ENCODE measurements at regions of chr17 and their contacts with region 1.

Region 1: GRCh38 chr17:19470532-19471261 is 59.7 kb downstream of the RNF112 start:
- DNase-seq: peak; percentile 78 to 95 (median 90)
- ATAC-seq: peak; percentile 91 to 96
- H3K4me3 ChIP-seq: peak overlapping the region; percentile 34
- H3K27ac ChIP-seq: peak overlapping the region; percentile 76
- H3K4me1 ChIP-seq: no peaks in the 10 kb centered on the region
- H3K27me3 ChIP-seq: no peaks in the 10 kb centered on the region

Region 2: DNA sequence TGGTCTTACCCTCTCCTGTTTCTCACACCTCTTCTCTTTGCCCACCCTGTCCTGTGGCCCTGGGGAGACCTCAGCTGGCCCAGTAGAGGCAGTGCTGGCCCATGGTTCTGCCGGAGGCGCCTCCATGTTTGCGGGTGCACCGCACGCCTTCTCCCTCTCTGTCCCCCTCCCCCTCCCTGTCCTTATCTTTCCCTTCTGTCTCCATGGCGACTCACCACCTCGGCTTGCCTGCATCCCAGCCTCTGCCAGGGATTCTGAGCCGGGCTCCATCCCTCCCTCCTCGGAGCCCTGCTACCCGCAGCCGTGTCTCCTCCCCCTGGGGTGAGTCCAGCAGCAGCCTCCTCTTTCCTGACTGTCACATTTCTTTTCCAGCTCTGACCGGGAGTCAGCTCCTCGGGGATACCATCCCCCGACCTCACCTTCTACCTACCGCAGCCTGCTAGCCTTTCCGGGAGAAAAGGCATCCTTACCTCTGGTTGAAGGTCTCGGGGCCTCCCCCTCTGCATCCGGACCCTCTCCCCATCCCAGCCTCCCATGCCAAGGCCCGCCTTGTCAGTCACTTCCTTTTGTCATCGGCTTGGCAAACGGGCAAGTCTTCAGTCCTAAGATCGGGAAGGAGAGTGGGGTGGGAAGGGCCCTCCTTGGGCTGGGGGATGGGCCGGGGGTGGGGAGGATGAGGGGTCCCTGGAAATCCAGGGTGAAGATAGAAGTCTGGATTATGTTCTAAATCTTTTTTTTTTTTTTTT is 59.6 kb before region 1 on chr17 and contains the start of gene RNF112:
- intact Hi-C with region 1: no loop called
- DNase-seq: peak; percentile 63 to 84 (median 80)
- ATAC-seq: peak; percentile 54 to 56
- H3K4me3 ChIP-seq: peak within 1 kb of the TSS; percentile 5
- H3K27ac ChIP-seq: no peak within 1 kb of the TSS
- H3K4me1 ChIP-seq: no peaks in the 10 kb centered on the region
- H3K27me3 ChIP-seq: no peaks in the 10 kb centered on the region
- total RNA-seq, gene RNF112: 2.5 to 6.3 (median 4.4) TPM

Region 3: GRCh38 chr17:19424934-19425868 is 45.5 kb before region 1 on chr17:
- intact Hi-C with region 1: loop called in 1 of 4 experiments (anchors 5 kb)
- DNase-seq: no peak
- ATAC-seq: peak; percentile 42 to 66
- H3K4me3 ChIP-seq: no peak overlapping the region
- H3K27ac ChIP-seq: no peak overlapping the region
- H3K4me1 ChIP-seq: no peaks in the 10 kb centered on the region
- H3K27me3 ChIP-seq: no peaks in the 10 kb centered on the region

Measured in right cardiac atrium (tissue), 5 donors.